H1 (cell line): ENCODE measurements at regions of chr5 and their contacts with region 1.

Region 1: GRCh38 chr5:131436081-131436480 is 172.2 kb downstream of the CDC42SE2 start:
- DNase-seq: no peak
- H3K4me3 ChIP-seq: no peak overlapping the region
- H3K27ac ChIP-seq: no peak overlapping the region
- H3K4me1 ChIP-seq: no peaks in the 10 kb centered on the region
- H3K27me3 ChIP-seq: no peaks in the 10 kb centered on the region
- CTCF ChIP-seq: no peak
- EP300 ChIP-seq: no peak
- POLR2A ChIP-seq: no peak
- RAD21 ChIP-seq: no peak

Region 2: DNA sequence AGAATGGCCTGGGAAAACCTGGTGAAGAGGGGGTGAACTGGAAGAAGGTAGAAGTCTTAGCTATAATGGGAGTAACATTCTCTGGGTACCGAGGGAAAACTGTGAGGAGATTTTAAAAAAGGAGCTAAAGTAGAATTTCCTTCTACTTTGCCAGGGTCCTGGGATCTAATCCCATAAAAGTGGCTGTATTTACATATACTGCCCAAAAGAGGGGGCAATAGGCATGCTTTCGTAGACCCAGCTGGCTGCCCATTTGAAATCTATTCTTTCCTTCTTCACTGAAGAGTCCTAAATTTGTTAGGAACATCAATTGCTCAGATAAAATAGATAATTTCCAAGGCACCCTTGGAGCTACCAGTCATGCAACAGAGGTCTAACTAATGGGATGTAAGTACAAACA is 13.0 kb before region 1 on chr5:
- CTCF ChIA-PET with region 1: interaction called, 11 read pairs
- POLR2A ChIA-PET with region 1: no interaction called
- DNase-seq: no peak
- H3K4me3 ChIP-seq: no peak overlapping the region
- H3K27ac ChIP-seq: no peak overlapping the region
- H3K4me1 ChIP-seq: no peaks in the 10 kb centered on the region
- H3K27me3 ChIP-seq: no peaks in the 10 kb centered on the region
- CTCF ChIP-seq: peak in 2 of 3 experiments; percentile 47 to 53; a peak in 3 of 4 replicates
- EP300 ChIP-seq: no peak
- POLR2A ChIP-seq: no peak
- RAD21 ChIP-seq: peak; percentile 69 to 72

Region 3: DNA sequence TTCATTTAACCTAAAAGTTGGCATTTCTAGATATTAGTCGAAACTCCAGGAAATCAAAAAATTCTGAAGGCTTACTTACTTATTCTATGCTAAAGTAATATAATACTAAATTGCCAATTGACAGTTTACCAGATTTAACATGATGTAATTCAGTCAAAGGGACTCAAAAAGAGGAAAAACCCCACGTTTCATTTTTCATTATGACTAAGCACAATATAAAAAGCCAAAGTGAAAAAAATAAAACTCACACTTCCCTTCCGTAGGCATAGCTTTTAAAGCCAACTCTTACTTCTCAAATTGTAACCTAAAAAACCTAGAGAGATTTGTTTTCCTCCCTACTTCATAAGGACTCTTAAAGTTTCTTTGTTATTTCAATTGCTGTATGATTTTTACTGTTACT is 52.4 kb after region 1 on chr5:
- CTCF ChIA-PET with region 1: no interaction called
- POLR2A ChIA-PET with region 1: no interaction called
- DNase-seq: no peak
- H3K4me3 ChIP-seq: no peak overlapping the region
- H3K27ac ChIP-seq: no peak overlapping the region
- H3K4me1 ChIP-seq: no peaks in the 10 kb centered on the region
- H3K27me3 ChIP-seq: no peaks in the 10 kb centered on the region
- CTCF ChIP-seq: no peak
- EP300 ChIP-seq: no peak
- POLR2A ChIP-seq: no peak
- RAD21 ChIP-seq: no peak